Activated CD4-positive, alpha-beta memory T cell treated with anti-CD3 and anti-CD28 coated beads for 36 hours (primary cell): ENCODE measurements at regions of chr14 and their contacts with region 1.

Region 1: GRCh38 chr14:105999361-106000028 is 473.1 kb downstream of the TMEM121 start:
- DNase-seq: peak; percentile 94
- H3K4me3 Mint-ChIP-seq: peak overlapping the region; percentile 52
- H3K27ac Mint-ChIP-seq: peak overlapping the region; percentile 71
- H3K4me1 Mint-ChIP-seq: peaks cover 46% of the 10 kb centered on the region
- H3K27me3 Mint-ChIP-seq: no peaks in the 10 kb centered on the region

Region 2: DNA sequence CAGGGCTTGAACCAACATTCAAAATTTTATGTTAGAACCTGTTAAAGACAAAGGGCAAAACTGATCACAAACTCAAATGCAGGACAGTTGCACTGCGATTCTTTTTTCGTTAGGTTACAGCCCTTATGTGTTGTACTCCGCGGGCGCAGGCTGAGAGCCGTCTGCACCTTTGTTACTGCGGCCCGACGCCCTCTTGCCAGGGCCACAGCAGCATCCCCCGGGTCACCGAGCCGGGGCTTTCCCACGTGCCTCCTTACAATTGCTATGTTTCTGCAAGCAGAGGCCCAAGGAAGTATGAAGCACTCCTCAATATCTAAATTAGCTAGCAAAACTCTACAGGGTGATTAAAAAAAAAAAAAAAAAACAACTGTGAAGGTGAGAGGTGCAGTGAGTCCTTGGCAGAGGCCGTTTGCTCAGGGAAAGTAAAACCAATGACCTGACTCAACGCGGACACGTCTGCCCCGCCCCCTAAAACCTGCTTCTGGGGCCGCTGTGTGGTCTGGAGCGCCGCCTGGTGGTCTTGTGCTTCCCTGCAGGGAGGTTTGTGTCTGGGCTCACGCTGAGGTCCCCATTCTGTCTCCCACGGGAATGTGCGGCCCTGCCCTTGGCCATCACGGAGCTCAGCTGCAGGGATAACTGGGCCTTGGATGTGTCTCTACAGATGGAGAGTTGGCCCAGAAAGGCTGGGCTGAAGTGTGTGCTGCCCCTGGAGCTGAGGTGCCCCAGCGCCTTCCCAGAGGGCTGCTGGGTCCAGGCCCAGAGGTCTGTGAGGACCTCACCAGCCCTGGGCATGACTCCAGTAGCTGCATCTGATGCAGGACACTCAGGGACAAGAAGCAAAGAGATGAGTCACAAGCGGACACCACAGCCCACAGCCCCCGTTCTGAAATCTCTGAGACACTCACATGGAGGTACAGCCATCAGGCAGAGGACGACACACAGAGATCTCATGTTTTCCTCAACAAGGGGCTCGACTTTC is 54.6 kb before region 1 on chr14:
- CTCF ChIA-PET with region 1: interaction called, 5 read pairs
- POLR2A ChIA-PET with region 1: no interaction called
- intact Hi-C with region 1: loop called (anchors 5 kb)
- DNase-seq: peak; percentile 91
- H3K4me3 Mint-ChIP-seq: no peak overlapping the region
- H3K27ac Mint-ChIP-seq: no peak overlapping the region
- H3K4me1 Mint-ChIP-seq: peaks cover 11% of the 10 kb centered on the region
- H3K27me3 Mint-ChIP-seq: peaks cover 4% of the 10 kb centered on the region

Region 3: DNA sequence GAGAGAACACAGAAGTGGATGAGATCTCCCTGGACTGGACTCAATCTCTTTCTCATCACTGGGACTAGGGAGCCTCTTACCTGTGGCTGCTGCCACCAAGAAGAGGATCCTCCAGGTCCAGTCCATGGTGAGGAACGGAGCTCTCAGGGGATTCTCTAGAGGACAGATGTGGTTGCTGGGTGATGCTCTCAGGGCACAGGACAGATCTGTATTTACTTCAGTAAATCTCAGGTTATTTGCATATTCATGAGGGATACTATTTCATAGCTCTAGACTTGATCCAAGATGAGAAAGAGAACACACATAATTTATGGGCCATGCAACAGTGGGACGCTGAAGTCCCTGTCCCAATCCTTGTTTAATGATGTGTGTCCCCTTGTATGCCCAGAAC is 12.6 kb before region 1 on chr14:
- CTCF ChIA-PET with region 1: interaction called, 9 read pairs
- POLR2A ChIA-PET with region 1: interaction called, 3 read pairs
- intact Hi-C with region 1: loop called (anchors 2 kb)
- DNase-seq: no peak
- H3K4me3 Mint-ChIP-seq: no peak overlapping the region
- H3K27ac Mint-ChIP-seq: peak overlapping the region; percentile 11
- H3K4me1 Mint-ChIP-seq: peaks cover 47% of the 10 kb centered on the region
- H3K27me3 Mint-ChIP-seq: no peaks in the 10 kb centered on the region

Region 4: DNA sequence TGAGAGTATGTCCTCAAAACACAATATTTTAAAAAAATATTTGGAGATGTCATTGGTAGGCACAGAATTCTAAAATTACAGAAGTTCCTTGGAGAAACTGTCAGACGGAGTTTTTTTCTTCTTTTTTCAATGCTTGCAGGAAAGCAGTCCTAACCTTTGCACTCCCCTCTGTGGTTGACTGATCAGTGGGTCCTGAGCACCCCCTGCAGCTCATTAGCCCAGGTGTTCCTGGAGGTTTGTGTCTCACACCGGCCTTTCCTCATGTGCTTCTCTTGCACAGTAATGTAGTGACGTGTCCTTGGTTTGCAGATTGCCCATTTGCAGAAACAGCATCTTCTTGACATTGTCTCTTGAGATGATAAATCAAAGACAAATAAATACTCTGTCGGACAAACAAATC is 39.9 kb after region 1 on chr14:
- CTCF ChIA-PET with region 1: interaction called, 24 read pairs
- POLR2A ChIA-PET with region 1: no interaction called
- intact Hi-C with region 1: no loop called
- DNase-seq: peak; percentile 77
- H3K4me3 Mint-ChIP-seq: no peak overlapping the region
- H3K27ac Mint-ChIP-seq: no peak overlapping the region
- H3K4me1 Mint-ChIP-seq: peaks cover 17% of the 10 kb centered on the region
- H3K27me3 Mint-ChIP-seq: peaks cover 4% of the 10 kb centered on the region

Region 5: GRCh38 chr14:106062502-106063272 is 63.2 kb after region 1 on chr14:
- CTCF ChIA-PET with region 1: interaction called, 11 read pairs
- POLR2A ChIA-PET with region 1: no interaction called
- intact Hi-C with region 1: no loop called
- DNase-seq: no peak
- H3K4me3 Mint-ChIP-seq: no peak overlapping the region
- H3K27ac Mint-ChIP-seq: no peak overlapping the region
- H3K4me1 Mint-ChIP-seq: peaks cover 28% of the 10 kb centered on the region
- H3K27me3 Mint-ChIP-seq: peaks cover 44% of the 10 kb centered on the region

Region 6: DNA sequence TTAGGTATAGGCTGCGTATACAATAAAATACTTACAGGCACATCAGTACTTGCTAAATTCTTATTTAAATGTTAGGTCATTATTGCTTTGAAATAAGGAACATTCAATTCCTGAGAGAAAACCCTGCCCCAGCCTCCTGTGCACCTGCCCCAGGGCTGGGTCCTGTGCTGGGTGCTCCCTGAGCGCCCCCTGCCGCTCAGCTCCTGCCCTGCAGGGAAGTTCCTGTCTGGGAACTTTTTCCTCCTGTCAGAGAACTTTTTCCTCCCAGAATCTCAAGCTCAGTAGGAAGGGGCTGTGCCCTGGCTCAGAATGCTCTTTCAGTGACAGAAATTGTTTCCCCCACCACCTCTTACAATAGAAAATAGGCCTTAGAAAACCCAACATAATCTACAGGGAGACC is 278.0 kb after region 1 on chr14:
- CTCF ChIA-PET with region 1: no interaction called
- POLR2A ChIA-PET with region 1: no interaction called
- intact Hi-C with region 1: no loop called
- DNase-seq: peak; percentile 40
- H3K4me3 Mint-ChIP-seq: no peak overlapping the region
- H3K27ac Mint-ChIP-seq: no peak overlapping the region
- H3K4me1 Mint-ChIP-seq: peaks cover 9% of the 10 kb centered on the region
- H3K27me3 Mint-ChIP-seq: peaks cover 26% of the 10 kb centered on the region